Head of caudate nucleus (tissue), 42 donors: ENCODE measurements at regions of chr13 and their contacts with region 1.

Region 1: GRCh38 chr13:25249001-25249543 is 38.2 kb downstream of the MTMR6 start:
- DNase-seq: peak in 41 of 42 donors; percentile 29 to 87 (median 63)

Region 2: DNA sequence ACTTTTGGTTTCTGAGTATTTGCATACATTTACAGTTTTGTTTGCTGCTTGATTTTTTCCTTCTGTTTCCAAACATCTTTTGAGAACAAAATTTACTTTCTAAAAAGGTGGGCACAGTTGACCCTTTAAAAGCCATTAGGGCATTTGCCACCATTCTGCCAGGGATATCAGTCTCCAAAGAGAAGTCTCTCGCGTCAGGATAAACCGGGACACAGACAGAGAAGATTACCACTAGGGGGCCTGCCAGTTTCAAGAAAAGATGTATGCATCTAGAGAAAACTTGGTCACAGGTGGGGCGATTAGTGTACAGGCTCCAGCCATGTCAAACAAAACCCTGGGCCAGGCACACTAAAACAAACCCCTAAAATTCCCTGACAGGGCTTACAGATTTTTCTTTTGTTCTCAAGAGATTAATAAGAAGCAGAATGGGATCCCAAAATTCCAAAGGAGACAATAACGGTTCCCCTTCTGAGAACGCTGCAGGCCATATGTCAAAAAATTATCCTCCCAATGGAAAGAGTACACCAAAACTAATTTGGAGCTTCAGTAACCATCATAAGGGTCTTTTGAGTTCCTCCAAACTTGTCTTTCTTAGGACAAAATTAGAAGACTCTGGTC is 163.8 kb before region 1 on chr13:
- intact Hi-C with region 1: loop called (anchors 10 kb)
- DNase-seq: peak in 41 of 42 donors; percentile 13 to 93 (median 76)

Region 3: GRCh38 chr13:25192936-25193335 is 56.1 kb before region 1 on chr13:
- intact Hi-C with region 1: loop called (anchors 10 kb)
- DNase-seq: peak; percentile 75 to 97 (median 92)

Region 4: DNA sequence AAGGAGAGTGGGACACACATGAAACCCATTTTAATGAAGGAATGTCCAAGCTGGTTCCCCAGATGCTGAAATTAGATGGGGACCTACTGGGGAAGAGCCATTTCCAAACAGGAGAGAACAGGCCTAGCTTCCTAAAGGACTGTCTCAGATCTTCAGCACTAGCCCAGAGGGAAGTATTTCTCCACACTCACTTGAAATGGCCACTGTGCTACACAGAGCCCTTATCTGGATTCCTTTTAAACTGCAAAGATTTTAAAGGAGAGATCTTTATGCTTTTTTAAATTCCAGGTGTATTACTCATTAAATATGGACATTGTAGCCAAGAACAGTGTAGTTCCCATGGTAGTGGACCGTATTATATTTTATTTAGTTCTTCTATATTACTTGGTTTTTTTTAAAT is 547.4 kb after region 1 on chr13:
- intact Hi-C with region 1: no loop called
- DNase-seq: no peak